ENCODE measurements at regions of chr1 and their contacts with region 1.

Region 1: DNA sequence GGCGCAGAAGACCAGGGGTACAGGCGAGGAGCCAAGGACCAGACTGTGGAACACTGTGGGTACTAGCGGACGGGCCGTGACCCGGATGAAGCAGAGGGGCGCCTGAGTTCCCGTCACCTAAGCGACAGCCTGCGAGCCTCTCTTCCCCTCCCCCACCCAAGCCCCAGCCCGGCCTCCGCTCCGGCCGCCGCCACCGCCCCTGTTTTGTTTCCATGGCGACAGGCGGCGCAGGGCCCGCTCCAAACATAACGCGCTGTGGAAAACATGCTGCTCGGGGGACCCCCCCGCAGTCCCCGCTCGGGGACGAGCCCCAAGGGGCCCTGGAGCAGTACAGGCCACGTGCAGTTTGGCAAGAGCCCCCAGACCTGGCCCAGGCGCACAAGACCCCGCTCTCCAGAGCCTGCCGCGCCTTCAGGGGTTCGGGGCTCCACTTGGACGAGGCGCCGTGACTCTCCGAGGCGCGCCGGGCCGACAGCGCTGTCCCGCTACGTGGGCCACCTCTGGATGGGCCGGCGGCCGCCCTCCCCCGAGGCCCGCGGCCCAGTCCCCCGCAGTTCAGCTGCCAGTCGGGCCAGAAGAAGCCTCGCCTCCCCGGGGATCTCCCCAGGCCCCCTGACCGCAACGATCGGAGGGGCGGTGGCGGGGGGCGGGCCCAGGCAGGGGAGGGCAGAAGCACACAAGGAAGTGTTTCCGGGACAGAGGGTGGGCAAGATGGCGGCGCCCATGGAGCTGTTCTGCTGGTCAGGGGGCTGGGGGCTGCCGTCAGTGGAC is at the start of gene MTX1:
- DNase-seq: peak; percentile 78
- ATAC-seq: peak; percentile 86
- H3K4me3 ChIP-seq: peak within 1 kb of the TSS; percentile 96 to 99 (median 98)
- H3K27ac ChIP-seq: peak within 1 kb of the TSS; percentile 98
- H3K4me1 ChIP-seq: peaks cover 29% of the 10 kb centered on the region
- H3K27me3 ChIP-seq: peaks cover 0 to 9% of the 10 kb centered on the region in 2 experiments; a peak in 1 of 5 replicates
- CTCF ChIP-seq: no peak
- EP300 ChIP-seq: no peak; a peak in 2 of 4 replicates
- POLR2A ChIP-seq: peak; percentile 72 to 82
- RAD21 ChIP-seq: peak; percentile 27; the same call in 1 of the 2 replicates
- total RNA-seq, gene MTX1: 64.5 and 71.5 TPM in 2 replicates

Region 2: GRCh38 chr1:155193275-155193990 is 15.3 kb before region 1 on chr1:
- CTCF ChIA-PET with region 1: interaction called, 4 read pairs
- POLR2A ChIA-PET with region 1: interaction called, 19 read pairs
- in situ Hi-C with region 1: no loop called
- intact Hi-C with region 1: no loop called
- DNase-seq: peak; percentile 75
- ATAC-seq: peak; percentile 91
- H3K4me3 ChIP-seq: peak overlapping the region; percentile 32 to 72 (median 60)
- H3K27ac ChIP-seq: no peak overlapping the region
- H3K4me1 ChIP-seq: peaks cover 27% of the 10 kb centered on the region
- H3K27me3 ChIP-seq: peaks cover 0 to 44% of the 10 kb centered on the region in 2 experiments; a peak in 4 of 5 replicates
- CTCF ChIP-seq: peak; percentile 96
- EP300 ChIP-seq: no peak
- POLR2A ChIP-seq: no peak
- RAD21 ChIP-seq: no peak; the same call in 1 of the 2 replicates

Region 3: GRCh38 chr1:155227261-155228095 is 18.8 kb after region 1 on chr1:
- CTCF ChIA-PET with region 1: interaction called, 12 read pairs
- POLR2A ChIA-PET with region 1: interaction called, 8 read pairs
- in situ Hi-C with region 1: no loop called
- intact Hi-C with region 1: loop called (anchors 1 kb)
- DNase-seq: peak; percentile 98
- ATAC-seq: peak; percentile 98
- H3K4me3 ChIP-seq: peak overlapping the region; percentile 67 to 69 (median 69)
- H3K27ac ChIP-seq: peak overlapping the region; percentile 66
- H3K4me1 ChIP-seq: peaks cover 32% of the 10 kb centered on the region
- H3K27me3 ChIP-seq: no peaks in the 10 kb centered on the region
- CTCF ChIP-seq: no peak
- EP300 ChIP-seq: peak in 1 of 2 experiments; percentile 6; a peak in 1 of 4 replicates
- POLR2A ChIP-seq: peak; percentile 70 to 81
- RAD21 ChIP-seq: no peak

Region 4: DNA sequence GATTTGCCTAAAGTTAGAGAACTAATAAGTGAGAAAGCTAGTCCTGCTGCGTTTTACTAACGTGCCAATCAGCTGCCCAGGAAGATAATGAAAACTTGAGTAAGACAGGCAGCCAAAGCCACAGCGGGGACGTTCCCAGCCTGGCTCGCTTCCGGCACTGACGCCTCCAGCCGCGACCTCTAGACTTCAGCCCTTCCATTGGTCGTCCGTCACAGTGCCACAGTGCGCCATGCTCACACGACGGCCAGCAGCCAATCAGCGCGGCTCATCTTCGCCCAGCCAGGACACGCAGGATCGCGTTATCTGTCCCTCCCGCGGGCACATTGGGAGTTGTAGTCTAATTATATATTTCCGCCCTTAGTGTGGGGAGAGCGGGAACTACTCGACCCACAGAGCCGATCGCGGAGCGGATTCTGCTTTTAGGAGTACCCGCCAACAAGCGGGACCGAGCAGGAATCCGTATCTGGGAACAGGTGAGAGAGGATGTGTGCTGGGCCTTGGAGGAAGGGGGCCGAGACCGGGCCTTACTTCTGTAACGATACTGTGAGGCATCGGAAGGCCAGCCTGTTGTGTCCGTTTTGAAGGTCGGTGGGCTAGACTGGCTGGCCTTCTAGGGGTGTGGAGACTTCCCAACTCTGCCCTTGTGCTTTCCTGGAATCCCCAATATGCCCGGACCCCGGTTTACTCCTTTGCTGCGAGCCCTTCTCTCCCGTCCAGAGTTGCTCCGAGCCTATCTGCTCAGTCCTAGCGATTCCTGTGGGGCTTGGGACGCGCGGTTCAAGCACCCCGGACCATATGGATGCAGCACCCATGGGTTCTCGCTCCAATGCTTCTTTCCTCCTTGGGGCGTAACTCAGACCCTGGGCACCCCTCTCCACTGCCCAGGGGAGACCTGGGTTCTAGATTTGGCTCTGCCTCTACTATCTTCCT is 100.0 kb after region 1 on chr1 and contains the start of gene FDPS:
- CTCF ChIA-PET with region 1: no interaction called
- POLR2A ChIA-PET with region 1: interaction called, 5 read pairs
- in situ Hi-C with region 1: no loop called
- intact Hi-C with region 1: loop called (anchors 10 kb)
- DNase-seq: peak; percentile 97
- ATAC-seq: peak; percentile 92
- H3K4me3 ChIP-seq: peak within 1 kb of the TSS; percentile 92 to 95 (median 94)
- H3K27ac ChIP-seq: peak within 1 kb of the TSS; percentile 83
- H3K4me1 ChIP-seq: peaks cover 84% of the 10 kb centered on the region
- H3K27me3 ChIP-seq: no peaks in the 10 kb centered on the region; a peak in 1 of 5 replicates
- CTCF ChIP-seq: no peak; the same call in 1 of the 2 replicates
- EP300 ChIP-seq: peak in 1 of 2 experiments; percentile 57; a peak in 2 of 4 replicates
- POLR2A ChIP-seq: peak; percentile 71 to 84
- RAD21 ChIP-seq: 0 out of 2 replicates have a peak, but pooled peaks have one; percentile 22
- total RNA-seq, gene FDPS: 519 and 610 TPM in 2 replicates

Region 5: GRCh38 chr1:155323798-155324610 is 115.3 kb after region 1 on chr1:
- CTCF ChIA-PET with region 1: interaction called, 3 read pairs
- POLR2A ChIA-PET with region 1: no interaction called
- in situ Hi-C with region 1: no loop called
- intact Hi-C with region 1: loop called (anchors 5 kb)
- DNase-seq: peak; percentile 93
- ATAC-seq: peak; percentile 84
- H3K4me3 ChIP-seq: peak overlapping the region; percentile 80 to 94 (median 81)
- H3K27ac ChIP-seq: peak overlapping the region; percentile 71
- H3K4me1 ChIP-seq: peaks cover 36% of the 10 kb centered on the region
- H3K27me3 ChIP-seq: no peaks in the 10 kb centered on the region; a peak in 1 of 5 replicates
- CTCF ChIP-seq: no peak
- EP300 ChIP-seq: no peak
- POLR2A ChIP-seq: peak in 1 of 2 experiments; percentile 61; a peak in 2 of 4 replicates
- RAD21 ChIP-seq: no peak

Region 6: DNA sequence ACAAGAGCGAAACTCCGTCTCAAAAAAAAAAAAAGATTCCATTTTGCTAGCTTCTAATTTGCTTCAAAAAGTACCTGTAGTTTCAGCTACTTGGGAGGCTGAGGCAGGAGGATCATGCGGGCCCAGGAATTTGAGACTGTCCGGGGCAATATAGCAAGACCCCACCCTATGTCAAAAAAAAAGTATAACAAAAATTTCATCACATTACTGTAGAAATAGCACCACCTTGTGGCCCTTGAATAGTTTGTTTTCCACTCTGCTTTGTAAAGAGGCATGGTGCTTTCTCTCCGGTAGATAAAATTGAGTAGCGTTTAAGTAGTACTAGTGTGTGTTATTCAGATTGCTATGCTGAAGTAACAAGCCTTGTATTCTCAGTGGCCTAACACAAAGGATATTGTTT is 383.0 kb after region 1 on chr1:
- CTCF ChIA-PET with region 1: interaction called, 13 read pairs
- POLR2A ChIA-PET with region 1: no interaction called
- in situ Hi-C with region 1: loop called (anchors 10 kb)
- intact Hi-C with region 1: no loop called
- DNase-seq: peak; percentile 68
- ATAC-seq: peak; percentile 68
- H3K4me3 ChIP-seq: no peak overlapping the region
- H3K27ac ChIP-seq: no peak overlapping the region
- H3K4me1 ChIP-seq: no peaks in the 10 kb centered on the region
- H3K27me3 ChIP-seq: no peaks in the 10 kb centered on the region
- CTCF ChIP-seq: peak; percentile 72
- EP300 ChIP-seq: no peak
- POLR2A ChIP-seq: no peak
- RAD21 ChIP-seq: peak; percentile 33; the same call in 1 of the 2 replicates